Pancreas (tissue), 10 donors: ENCODE measurements at regions of chr18 and their contacts with region 1.

Region 1: GRCh38 chr18:66749030-66749429 is 145.1 kb upstream of the CDH19 start:
- DNase-seq: no peak
- ATAC-seq: peak; percentile 40 to 82 (median 77)
- H3K4me3 ChIP-seq: no peak overlapping the region
- H3K27ac ChIP-seq: no peak overlapping the region
- H3K4me1 ChIP-seq: no peaks in the 10 kb centered on the region
- H3K27me3 ChIP-seq: no peaks in the 10 kb centered on the region
- CTCF ChIP-seq: peak in 2 of 4 donors; percentile 10 to 15

Region 2: DNA sequence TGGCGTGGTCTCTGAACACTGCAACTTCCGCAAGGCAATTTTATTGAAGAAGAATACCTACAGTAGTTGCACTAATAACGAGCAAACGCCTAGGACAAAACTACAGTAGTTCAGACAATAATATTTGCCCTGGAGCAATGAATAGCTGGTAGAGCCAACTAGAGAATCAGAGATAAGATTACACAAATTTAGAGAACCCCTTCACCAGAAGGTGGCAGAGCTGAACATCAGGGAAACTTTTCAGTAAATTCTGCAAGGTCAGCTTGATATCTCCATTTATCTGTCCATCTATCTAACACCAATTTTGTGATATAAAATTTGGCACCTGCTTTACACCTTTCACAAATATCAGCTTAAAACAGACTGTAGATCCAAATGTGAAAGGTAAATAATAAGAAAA is 188.9 kb before region 1 on chr18:
- intact Hi-C with region 1: loop called in 1 of 3 experiments (anchors 5 kb)
- DNase-seq: peak in 1 of 6 donors; percentile 10
- ATAC-seq: peak in 3 of 4 donors; percentile 59 to 85 (median 72)
- H3K4me3 ChIP-seq: no peak overlapping the region
- H3K27ac ChIP-seq: no peak overlapping the region
- H3K4me1 ChIP-seq: no peaks in the 10 kb centered on the region
- H3K27me3 ChIP-seq: no peaks in the 10 kb centered on the region
- CTCF ChIP-seq: peak in 2 of 4 donors; percentile 24 to 25

Region 3: DNA sequence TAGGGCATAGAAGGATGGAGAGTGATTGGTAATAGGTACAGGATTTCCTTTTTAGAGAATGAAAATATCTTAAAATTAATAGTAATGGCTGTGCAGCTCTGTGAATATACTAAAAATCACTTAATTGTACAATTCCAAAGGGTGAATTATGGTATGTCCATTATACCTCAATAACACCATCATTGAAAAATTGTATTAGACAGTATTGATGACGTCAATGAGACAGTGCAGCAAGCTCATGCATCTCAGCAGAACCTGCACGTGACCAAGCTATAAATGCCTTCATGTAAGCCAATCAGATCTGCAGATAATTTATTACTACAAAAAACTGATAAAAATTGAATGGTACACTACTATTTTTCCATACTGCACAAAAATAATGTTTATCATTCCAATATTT is 209.3 kb after region 1 on chr18:
- intact Hi-C with region 1: no loop called
- DNase-seq: no peak
- ATAC-seq: no peak
- H3K4me3 ChIP-seq: no peak overlapping the region
- H3K27ac ChIP-seq: no peak overlapping the region
- H3K4me1 ChIP-seq: no peaks in the 10 kb centered on the region
- H3K27me3 ChIP-seq: no peaks in the 10 kb centered on the region
- CTCF ChIP-seq: no peak

Region 4: DNA sequence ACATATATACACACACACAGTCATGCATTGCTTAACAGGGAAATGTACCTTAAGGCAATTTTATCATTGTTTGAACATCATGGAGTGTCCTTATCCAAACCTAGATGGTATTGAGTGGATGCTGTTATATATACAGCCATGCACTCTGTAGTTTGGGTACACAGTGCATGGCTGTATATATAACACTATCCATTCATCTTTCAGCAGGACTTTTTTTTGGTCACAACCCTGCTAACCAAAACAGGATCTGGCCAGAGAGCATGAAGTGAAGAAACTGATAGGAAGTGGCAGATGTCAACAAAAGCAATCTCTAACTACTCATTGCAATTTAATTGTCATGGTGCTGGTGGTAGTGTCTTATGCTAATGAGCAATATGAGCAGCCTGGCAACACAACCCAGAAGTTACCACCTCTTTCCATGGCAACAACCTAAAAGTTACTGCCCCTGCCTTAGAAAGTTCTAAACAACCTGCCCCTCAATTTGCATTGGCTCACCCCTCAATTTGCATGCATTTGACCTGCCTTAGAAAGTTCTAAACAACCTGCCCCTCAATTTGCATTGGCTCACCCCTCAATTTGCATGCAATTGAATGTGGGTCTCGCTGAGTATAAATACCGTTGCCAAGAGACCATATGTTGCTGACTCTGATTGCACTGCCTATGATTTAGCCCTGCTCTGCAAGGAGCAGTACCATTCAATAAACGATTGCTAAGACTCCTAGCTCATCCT is 332.6 kb after region 1 on chr18:
- intact Hi-C with region 1: no loop called
- DNase-seq: no peak
- ATAC-seq: no peak
- H3K4me3 ChIP-seq: no peak overlapping the region
- H3K27ac ChIP-seq: no peak overlapping the region
- H3K4me1 ChIP-seq: no peaks in the 10 kb centered on the region
- H3K27me3 ChIP-seq: no peaks in the 10 kb centered on the region
- CTCF ChIP-seq: no peak